B cell (primary cell): ENCODE measurements at regions of chr18 and their contacts with region 1.

Region 1: DNA sequence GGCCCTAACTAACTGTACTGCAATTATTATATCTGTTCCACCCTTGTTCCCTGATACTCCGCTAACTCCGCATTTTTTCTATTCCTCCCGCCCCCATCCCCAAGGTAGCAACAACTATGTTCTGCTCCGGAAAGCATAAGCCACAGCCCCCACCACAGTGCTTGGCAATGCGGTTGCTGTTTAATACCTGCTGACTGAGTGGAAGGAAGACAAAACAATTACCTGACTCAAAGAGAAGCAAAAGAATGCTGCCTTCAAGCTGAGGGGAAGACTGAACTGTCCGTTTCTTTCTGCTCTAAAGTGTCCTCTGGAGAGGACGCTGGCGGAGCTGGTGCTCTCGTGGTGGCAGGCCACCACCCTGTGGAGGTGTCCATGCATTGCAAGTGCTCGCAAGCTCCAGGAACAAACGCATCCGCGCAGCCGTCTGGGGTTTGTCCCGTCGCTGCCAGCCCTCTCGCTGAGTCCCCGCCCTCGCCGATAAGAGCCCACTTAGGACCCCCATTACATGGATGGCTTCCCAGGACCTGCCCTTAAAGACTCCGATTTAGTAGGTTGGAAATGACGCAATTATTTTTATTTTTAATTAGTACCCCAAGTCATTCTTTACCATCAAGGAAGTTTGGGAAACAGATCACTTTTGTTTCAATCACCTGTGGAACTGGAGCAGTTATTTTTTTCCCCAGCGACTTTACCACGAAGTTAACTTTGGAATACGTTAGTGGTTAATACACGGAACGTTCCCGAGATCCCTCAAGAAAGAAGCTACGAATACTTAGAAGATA is 1.6 kb upstream of the MYL12A start:
- DNase-seq: peak; percentile 86
- ATAC-seq: peak; percentile 55
- H3K4me3 ChIP-seq: peak overlapping the region; percentile 91 to 99 (median 96)
- H3K4me3 Mint-ChIP-seq: peak overlapping the region; percentile 91
- H3K27ac ChIP-seq: peak overlapping the region; percentile 89 to 94
- H3K27ac Mint-ChIP-seq: peak overlapping the region; percentile 97
- H3K4me1 ChIP-seq: peaks cover 28 to 37% of the 10 kb centered on the region in 2 donors
- H3K4me1 Mint-ChIP-seq: peaks cover 37% of the 10 kb centered on the region
- H3K27me3 ChIP-seq: no peaks in the 10 kb centered on the region
- H3K27me3 Mint-ChIP-seq: no peaks in the 10 kb centered on the region
- CTCF ChIP-seq: peak; percentile 86

Region 2: DNA sequence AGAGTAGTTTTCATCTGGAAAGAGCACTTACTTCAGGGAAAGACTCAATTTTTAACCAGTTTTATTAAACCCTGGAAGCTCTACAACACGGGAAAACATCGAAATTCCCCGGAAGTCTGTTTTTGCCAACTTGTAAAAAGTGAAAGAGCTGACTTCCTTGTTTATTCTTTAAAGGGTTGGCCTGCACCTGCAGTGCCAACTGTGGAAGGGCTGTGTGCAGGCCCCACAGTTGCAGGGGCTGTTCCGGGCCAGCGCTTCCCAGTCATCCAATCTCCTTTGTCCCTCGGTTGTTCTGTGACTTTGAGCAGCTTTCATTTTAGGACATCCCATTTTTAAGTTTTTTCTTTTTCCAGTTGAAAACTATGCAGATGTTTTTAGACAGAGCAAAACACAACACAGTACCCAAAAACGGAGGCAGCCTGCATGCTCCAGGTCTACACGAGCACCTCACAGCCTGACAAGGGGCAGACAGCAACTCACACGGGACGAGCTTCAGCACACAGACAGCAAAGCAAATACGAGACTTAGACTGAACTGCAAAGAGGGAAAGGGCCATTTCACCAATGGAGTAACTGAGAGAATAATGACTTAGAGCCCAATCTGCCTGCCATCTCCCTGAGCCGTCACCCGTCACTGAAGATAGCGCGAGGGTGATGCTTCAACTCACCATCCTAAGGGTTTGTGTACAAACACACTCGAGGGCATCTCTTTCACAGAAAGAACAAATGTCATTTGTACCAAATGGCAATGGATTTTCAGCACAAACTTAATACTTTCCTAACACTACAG is 328.6 kb before region 1 on chr18:
- CTCF ChIA-PET with region 1: interaction called, 12 read pairs
- POLR2A ChIA-PET with region 1: no interaction called
- intact Hi-C with region 1: no loop called
- DNase-seq: peak; percentile 60
- ATAC-seq: peak; percentile 86
- H3K4me3 ChIP-seq: peak overlapping the region in 2 of 5 experiments; percentile 20 to 34
- H3K4me3 Mint-ChIP-seq: peak overlapping the region; percentile 79
- H3K27ac ChIP-seq: peak overlapping the region; percentile 55 to 74
- H3K27ac Mint-ChIP-seq: peak overlapping the region; percentile 92
- H3K4me1 ChIP-seq: peaks cover 21 to 26% of the 10 kb centered on the region in 2 donors
- H3K4me1 Mint-ChIP-seq: peaks cover 38% of the 10 kb centered on the region
- H3K27me3 ChIP-seq: no peaks in the 10 kb centered on the region
- H3K27me3 Mint-ChIP-seq: no peaks in the 10 kb centered on the region
- CTCF ChIP-seq: no peak

Region 3: DNA sequence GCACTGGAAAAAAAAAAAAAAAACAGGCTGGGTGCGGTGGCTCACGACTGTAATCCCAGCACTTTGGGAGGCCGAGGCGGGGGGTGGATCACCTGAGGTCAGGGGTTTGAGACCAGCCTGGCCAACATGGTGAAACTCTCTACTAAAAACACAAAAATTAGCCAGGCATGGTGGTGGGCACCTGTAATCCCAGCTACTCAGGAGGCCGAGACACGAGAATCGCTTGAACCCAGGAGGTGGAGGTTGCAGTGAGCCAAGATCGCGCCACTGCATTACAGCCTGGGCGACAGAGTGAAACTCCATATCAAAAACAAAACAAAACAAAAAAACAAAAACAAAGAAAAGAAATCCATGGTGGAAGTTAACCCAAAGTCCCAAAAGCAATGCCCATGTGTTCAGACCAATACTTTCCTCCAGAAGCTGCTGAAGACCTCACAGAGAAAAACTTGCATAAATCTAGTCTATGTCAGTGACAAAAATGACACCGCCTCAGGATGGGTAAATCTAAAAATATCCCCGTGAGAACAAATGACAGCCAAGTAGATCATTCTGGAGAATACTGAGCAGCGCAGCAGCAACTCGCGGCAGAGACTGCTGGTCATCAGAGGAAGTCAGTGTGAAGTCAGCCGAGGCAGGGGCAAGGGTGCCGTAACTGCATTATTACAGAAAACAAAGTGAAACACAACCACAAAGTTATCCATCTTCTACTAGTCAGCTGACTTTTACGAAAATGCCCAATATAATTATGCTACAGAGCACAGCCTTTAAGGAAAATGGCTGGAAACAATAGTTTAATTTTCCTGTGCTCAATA is 274.1 kb before region 1 on chr18:
- CTCF ChIA-PET with region 1: interaction called, 11 read pairs
- POLR2A ChIA-PET with region 1: interaction called, 4 read pairs
- intact Hi-C with region 1: no loop called
- DNase-seq: peak; percentile 86
- ATAC-seq: peak; percentile 81
- H3K4me3 ChIP-seq: peak overlapping the region; percentile 18 to 58 (median 47)
- H3K4me3 Mint-ChIP-seq: peak overlapping the region; percentile 88
- H3K27ac ChIP-seq: peak overlapping the region; percentile 89 to 91
- H3K27ac Mint-ChIP-seq: peak overlapping the region; percentile 96
- H3K4me1 ChIP-seq: peaks cover 64 to 66% of the 10 kb centered on the region in 2 donors
- H3K4me1 Mint-ChIP-seq: peaks cover 70% of the 10 kb centered on the region
- H3K27me3 ChIP-seq: no peaks in the 10 kb centered on the region
- H3K27me3 Mint-ChIP-seq: no peaks in the 10 kb centered on the region
- CTCF ChIP-seq: no peak

Region 4: GRCh38 chr18:3062798-3063680 is 183.0 kb before region 1 on chr18:
- CTCF ChIA-PET with region 1: interaction called, 52 read pairs
- POLR2A ChIA-PET with region 1: no interaction called
- intact Hi-C with region 1: loop called (anchors 1 kb)
- DNase-seq: peak; percentile 65
- ATAC-seq: peak; percentile 73
- H3K4me3 ChIP-seq: no peak overlapping the region
- H3K4me3 Mint-ChIP-seq: no peak overlapping the region
- H3K27ac ChIP-seq: no peak overlapping the region
- H3K27ac Mint-ChIP-seq: peak overlapping the region; percentile 10
- H3K4me1 ChIP-seq: peaks cover 27 to 31% of the 10 kb centered on the region in 2 donors
- H3K4me1 Mint-ChIP-seq: peaks cover 40% of the 10 kb centered on the region
- H3K27me3 ChIP-seq: no peaks in the 10 kb centered on the region
- H3K27me3 Mint-ChIP-seq: no peaks in the 10 kb centered on the region
- CTCF ChIP-seq: peak; percentile 68

Region 5: DNA sequence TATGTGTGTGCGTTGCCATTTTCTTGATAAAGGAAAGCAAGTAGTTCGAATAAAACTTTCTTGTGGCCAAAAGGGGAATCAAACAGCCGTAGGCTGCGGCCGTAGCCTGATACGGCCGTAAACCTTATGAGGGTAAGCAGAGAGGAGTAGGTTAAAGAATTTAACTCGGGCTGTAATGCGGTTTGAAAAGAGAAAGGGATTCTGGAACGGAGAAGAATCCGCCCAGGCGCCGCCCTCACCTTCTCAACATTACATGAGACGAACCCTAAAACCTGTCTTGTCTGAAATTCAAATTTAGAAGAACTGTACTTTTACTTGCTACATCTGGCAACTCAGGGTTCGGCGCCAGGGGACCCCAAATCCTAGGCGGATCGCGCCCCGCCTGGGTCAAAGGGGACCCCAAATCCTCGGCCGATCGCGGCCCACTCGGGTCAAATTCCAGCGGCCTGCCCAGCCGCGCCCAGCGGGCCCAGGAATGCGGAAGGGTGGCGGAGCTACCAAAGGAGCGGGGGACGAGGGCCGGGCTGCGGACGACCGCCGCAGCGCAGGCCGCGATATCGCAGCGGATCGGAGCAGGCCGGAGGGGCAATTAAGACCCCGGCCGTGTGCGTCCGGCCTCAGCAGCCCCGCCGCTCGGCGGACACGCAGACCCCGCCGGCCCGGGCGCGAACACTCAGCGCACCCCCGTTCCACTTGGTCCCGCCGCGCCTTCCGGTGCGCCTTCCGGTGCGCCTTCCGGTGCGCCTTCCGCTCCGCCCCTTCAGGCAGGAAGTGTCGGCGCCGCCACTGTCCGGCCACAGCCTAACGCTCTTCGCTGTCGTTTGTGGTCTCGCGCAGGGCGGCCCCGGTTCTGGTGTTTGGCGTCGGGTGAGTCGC is 15.6 kb after region 1 on chr18 and contains the start of gene MYL12B:
- CTCF ChIA-PET with region 1: interaction called, 23 read pairs
- POLR2A ChIA-PET with region 1: interaction called, 35 read pairs
- intact Hi-C with region 1: loop called (anchors 1 kb)
- DNase-seq: peak; percentile 93
- ATAC-seq: peak; percentile 80
- H3K4me3 ChIP-seq: peak within 1 kb of the TSS; percentile 75 to 96 (median 86)
- H3K4me3 Mint-ChIP-seq: peak within 1 kb of the TSS; percentile 88
- H3K27ac ChIP-seq: peak within 1 kb of the TSS; percentile 86 to 97
- H3K27ac Mint-ChIP-seq: peak within 1 kb of the TSS; percentile 100
- H3K4me1 ChIP-seq: peaks cover 70 to 73% of the 10 kb centered on the region in 2 donors
- H3K4me1 Mint-ChIP-seq: peaks cover 77% of the 10 kb centered on the region
- H3K27me3 ChIP-seq: no peaks in the 10 kb centered on the region
- H3K27me3 Mint-ChIP-seq: no peaks in the 10 kb centered on the region
- CTCF ChIP-seq: no peak
- total RNA-seq, gene MYL12B: 124 and 127 TPM in 2 replicates

Region 6: DNA sequence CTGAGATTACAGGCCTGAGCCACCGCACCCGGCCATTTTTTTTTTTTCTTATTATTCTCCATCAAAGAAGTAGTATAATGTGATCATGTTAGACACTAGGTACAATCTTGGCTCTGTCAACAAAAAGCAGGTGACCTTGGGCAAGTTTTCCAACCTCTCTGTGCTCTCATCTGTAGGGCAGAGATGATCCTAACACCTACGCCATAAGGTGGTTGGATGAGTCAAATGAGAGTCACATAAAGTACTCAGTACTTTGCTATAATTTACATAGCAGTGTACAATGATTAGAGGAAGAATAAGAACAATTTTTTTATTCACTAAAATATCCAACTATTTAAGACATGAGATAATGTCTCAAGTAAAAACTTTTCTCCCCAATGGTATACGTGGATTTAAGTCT is 332.6 kb after region 1 on chr18:
- CTCF ChIA-PET with region 1: no interaction called
- POLR2A ChIA-PET with region 1: no interaction called
- intact Hi-C with region 1: no loop called
- DNase-seq: no peak
- ATAC-seq: no peak
- H3K4me3 ChIP-seq: no peak overlapping the region
- H3K4me3 Mint-ChIP-seq: no peak overlapping the region
- H3K27ac ChIP-seq: no peak overlapping the region
- H3K27ac Mint-ChIP-seq: no peak overlapping the region
- H3K4me1 ChIP-seq: peaks cover 2% of the 10 kb centered on the region in 2 donors
- H3K4me1 Mint-ChIP-seq: peaks cover 5% of the 10 kb centered on the region
- H3K27me3 ChIP-seq: no peaks in the 10 kb centered on the region
- H3K27me3 Mint-ChIP-seq: no peaks in the 10 kb centered on the region
- CTCF ChIP-seq: no peak

Region 7: GRCh38 chr18:3665780-3666525 is 419.9 kb after region 1 on chr18:
- CTCF ChIA-PET with region 1: interaction called, 41 read pairs
- POLR2A ChIA-PET with region 1: no interaction called
- intact Hi-C with region 1: no loop called
- DNase-seq: peak; percentile 80
- ATAC-seq: peak; percentile 88
- H3K4me3 ChIP-seq: no peak overlapping the region
- H3K4me3 Mint-ChIP-seq: peak overlapping the region; percentile 69
- H3K27ac ChIP-seq: no peak overlapping the region
- H3K27ac Mint-ChIP-seq: no peak overlapping the region
- H3K4me1 ChIP-seq: peaks cover 9 to 12% of the 10 kb centered on the region in 2 donors
- H3K4me1 Mint-ChIP-seq: peaks cover 16% of the 10 kb centered on the region
- H3K27me3 ChIP-seq: no peaks in the 10 kb centered on the region
- H3K27me3 Mint-ChIP-seq: no peaks in the 10 kb centered on the region
- CTCF ChIP-seq: peak; percentile 97